ENCODE measurements at regions of chr11 and their contacts with region 1.

Region 1: DNA sequence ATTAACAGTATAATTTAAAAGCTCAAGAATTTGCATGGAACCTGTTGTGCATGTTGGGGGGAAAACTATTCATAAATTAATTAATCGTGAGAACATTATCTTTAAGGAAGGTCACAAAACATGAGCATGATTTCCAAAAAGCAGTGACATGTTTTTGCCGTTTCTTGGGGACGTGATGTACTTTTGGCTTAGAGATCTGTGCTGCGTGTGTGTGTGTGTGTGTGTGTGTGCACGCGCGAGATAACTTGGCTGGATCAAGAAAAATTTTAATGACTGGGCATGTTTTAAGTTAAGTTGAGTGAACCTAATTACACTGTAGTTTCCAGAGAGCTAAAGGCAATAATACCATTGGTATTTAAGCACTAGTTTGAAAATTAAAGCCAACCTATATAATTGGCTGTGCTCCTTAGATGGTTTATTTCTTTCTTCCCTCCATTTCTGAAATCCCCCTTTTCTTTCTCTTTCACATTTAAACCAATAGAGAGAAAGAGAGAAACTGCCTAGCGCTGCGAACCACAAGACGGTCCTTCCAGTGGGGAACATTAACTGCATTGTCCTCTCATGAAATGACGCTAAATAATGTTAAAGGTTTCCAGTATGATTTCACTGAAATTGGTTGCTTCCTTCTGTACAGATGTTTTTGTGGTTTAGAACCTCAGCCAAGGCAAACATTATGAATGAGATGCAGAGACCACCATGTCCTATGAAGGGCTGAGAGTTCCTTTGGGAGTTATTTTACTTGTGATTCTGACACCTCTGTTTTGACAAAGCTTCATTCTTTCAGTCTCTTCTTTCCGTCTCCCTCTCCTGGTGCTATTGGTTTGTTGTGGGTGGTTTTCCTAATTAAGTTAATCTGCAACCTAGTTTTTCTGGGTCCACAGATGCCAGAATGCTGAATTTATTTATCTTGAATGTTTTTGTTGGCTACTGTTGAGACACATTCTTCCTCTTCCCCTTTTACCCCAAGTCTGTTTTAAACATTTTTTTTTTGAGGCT is 51.7 kb downstream of the ZBTB16 start:
- DNase-seq: no peak

Region 2: DNA sequence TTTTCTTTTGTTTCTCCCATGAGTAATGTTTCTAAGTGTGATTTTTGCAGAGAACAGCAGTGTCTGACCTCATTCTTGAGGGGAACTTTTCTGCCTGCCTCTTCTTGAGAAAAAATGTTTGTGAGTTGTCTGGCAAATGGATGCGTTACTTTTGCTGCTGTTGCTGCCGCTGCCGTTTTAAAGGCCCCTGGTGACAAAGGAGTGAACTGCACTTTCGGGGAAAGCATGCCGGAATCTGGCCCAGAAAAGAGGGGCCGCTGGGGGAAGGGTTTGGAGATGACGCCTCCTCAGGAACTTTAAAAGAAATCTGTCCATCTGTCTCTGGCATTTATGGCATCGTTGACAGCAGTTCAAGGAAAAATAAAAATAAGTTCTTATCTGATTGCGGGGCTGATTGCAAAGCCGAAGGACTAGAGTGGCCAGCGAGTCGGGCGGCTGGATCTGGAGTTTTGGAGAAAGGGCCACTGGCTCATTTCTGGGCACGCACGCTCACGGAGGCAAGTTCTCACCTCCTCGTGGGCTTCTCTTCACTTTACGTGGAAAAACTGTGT is 35.3 kb before region 1 on chr11:
- intact Hi-C with region 1: loop called (anchors 5 kb)
- DNase-seq: peak; percentile 75